ENCODE measurements at regions of chr11 and their contacts with region 1.

Region 1: DNA sequence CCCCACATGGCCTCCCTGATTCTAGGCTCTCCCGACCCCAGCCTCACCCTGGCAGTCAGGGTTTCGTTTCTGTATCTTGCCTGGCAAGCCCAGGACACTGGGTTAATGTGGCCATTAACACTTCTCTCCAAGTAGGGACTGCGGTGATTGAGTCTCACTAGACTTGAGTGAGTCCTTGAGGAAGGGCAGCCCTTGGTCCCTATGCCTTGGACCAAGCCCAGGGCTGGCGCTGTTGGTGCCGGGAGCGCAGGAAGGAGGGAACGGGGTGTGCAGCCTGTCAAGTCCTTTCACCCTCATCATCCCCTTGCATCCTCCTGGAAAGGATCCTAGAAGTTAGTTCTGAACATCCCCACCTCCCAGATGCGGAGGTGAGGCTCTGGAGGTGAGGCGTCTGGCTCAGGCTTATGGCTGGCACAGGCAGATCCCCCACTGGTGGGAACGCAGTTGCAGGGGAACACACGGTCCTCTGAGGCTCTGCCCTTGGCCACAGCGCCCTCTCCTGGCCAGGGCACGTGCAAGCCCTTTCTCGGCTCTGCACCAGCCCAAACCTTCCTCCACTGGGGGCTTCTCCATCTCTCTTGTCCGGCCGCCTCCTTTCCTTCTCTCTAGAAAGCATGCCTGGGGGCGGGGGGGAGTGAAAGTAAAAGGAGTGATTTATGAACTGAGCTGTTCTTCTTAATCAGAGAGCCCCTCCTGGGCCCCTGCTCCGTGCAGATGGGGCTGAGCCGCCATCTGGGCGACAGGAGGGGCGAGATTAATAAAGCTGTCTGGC is 56.7 kb downstream of the TP53I11 start:
- DNase-seq: peak; percentile 73 to 82
- ATAC-seq: peak; percentile 90 to 95 (median 92)
- H3K4me3 ChIP-seq: no peak overlapping the region
- H3K27ac ChIP-seq: peak overlapping the region in 9 of 10 donors; percentile 17 to 68 (median 42)
- H3K4me1 ChIP-seq: peaks cover 0 to 39% (median 18%) of the 10 kb centered on the region in 9 donors
- H3K27me3 ChIP-seq: no peaks in the 10 kb centered on the region
- CTCF ChIP-seq: peak; percentile 78 to 94 (median 90)

Region 2: GRCh38 chr11:44621140-44621681 is 272.8 kb before region 1 on chr11:
- intact Hi-C with region 1: loop called in 9 of 10 experiments (anchors 1 to 5 kb)
- DNase-seq: peak; percentile 76 to 83
- ATAC-seq: peak; percentile 62 to 82 (median 70)
- H3K4me3 ChIP-seq: peak overlapping the region in 6 of 10 donors; percentile 10 to 39 (median 33)
- H3K27ac ChIP-seq: no peak overlapping the region
- H3K4me1 ChIP-seq: peaks cover 12 to 54% (median 37%) of the 10 kb centered on the region in 9 donors
- H3K27me3 ChIP-seq: no peaks in the 10 kb centered on the region
- CTCF ChIP-seq: peak; percentile 97 to 99 (median 98)

Region 3: GRCh38 chr11:44634401-44635281 is 259.4 kb before region 1 on chr11:
- intact Hi-C with region 1: loop called in 2 of 10 experiments (anchors 5 kb)
- DNase-seq: peak; percentile 72 to 83
- ATAC-seq: peak; percentile 67 to 89 (median 82)
- H3K4me3 ChIP-seq: peak overlapping the region in 1 of 10 donors; percentile 26
- H3K27ac ChIP-seq: peak overlapping the region in 3 of 10 donors; percentile 14 to 62 (median 45)
- H3K4me1 ChIP-seq: peaks cover 10 to 52% (median 36%) of the 10 kb centered on the region in 9 donors
- H3K27me3 ChIP-seq: no peaks in the 10 kb centered on the region
- CTCF ChIP-seq: no peak

Region 4: DNA sequence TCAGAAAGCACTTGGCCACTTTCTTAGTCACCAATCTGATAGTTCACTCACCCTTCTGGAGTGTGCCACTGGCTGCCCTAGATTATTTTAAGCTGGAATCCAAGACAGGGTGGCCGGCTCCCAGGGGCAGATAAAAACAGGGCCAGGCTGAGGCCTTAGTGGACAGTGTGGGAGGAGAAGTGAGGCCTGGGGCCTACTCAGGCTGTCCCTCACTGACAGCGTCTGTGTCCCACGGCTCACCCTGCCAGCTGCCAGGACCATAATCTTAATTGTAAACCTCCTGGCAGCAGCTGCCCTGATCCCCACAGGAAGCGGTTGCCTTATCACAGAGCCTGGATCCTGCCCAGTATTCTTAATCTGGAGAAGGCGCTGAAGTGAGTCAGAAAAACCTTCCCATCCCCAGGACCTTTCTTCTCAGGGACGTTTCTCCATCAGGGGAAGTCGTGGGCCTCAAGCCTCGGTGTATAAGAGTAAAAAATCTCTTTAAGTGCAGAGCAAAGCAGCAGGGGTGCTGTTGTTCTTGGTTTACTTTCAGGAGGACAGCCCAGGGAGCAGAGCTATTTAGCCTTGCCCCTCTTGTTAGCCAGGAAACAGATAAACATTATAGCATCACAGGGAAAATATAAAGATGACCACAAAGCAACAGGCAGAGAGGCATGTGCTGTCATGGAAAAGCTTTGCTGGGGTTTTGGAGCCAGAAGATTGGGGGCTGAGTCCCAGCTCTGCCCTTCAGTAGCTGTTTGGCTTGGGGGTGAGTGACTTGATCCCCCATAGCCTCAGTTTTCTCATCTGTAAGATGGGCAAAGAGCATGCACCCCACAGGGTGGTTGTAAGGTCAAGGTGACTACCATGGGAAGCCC is 127.7 kb before region 1 on chr11:
- intact Hi-C with region 1: loop called in 1 of 10 experiments (anchors 5 kb)
- DNase-seq: peak; percentile 72 to 80
- ATAC-seq: peak; percentile 71 to 92 (median 83)
- H3K4me3 ChIP-seq: no peak overlapping the region
- H3K27ac ChIP-seq: peak overlapping the region; percentile 81 to 92 (median 87)
- H3K4me1 ChIP-seq: peaks cover 16 to 84% (median 71%) of the 10 kb centered on the region in 9 donors
- H3K27me3 ChIP-seq: no peaks in the 10 kb centered on the region
- CTCF ChIP-seq: peak in 3 of 9 donors; percentile 7 to 28 (median 21)

Region 5: GRCh38 chr11:44785856-44786606 is 108.0 kb before region 1 on chr11:
- intact Hi-C with region 1: loop called in 1 of 10 experiments (anchors 10 kb)
- DNase-seq: no peak
- ATAC-seq: peak in 5 of 8 donors; percentile 12 to 37 (median 25)
- H3K4me3 ChIP-seq: no peak overlapping the region
- H3K27ac ChIP-seq: peak overlapping the region in 5 of 10 donors; percentile 7 to 75 (median 36)
- H3K4me1 ChIP-seq: peaks cover 16 to 85% (median 56%) of the 10 kb centered on the region in 9 donors
- H3K27me3 ChIP-seq: no peaks in the 10 kb centered on the region
- CTCF ChIP-seq: peak in 5 of 9 donors; percentile 6 to 35 (median 27)

Region 6: GRCh38 chr11:44877571-44878497 is 16.2 kb before region 1 on chr11:
- intact Hi-C with region 1: no loop called
- DNase-seq: no peak
- ATAC-seq: peak in 7 of 8 donors; percentile 23 to 56 (median 40)
- H3K4me3 ChIP-seq: no peak overlapping the region
- H3K27ac ChIP-seq: peak overlapping the region in 4 of 10 donors; percentile 1 to 54 (median 16)
- H3K4me1 ChIP-seq: peaks cover 0 to 36% (median 14%) of the 10 kb centered on the region in 9 donors
- H3K27me3 ChIP-seq: no peaks in the 10 kb centered on the region
- CTCF ChIP-seq: no peak

Region 7: DNA sequence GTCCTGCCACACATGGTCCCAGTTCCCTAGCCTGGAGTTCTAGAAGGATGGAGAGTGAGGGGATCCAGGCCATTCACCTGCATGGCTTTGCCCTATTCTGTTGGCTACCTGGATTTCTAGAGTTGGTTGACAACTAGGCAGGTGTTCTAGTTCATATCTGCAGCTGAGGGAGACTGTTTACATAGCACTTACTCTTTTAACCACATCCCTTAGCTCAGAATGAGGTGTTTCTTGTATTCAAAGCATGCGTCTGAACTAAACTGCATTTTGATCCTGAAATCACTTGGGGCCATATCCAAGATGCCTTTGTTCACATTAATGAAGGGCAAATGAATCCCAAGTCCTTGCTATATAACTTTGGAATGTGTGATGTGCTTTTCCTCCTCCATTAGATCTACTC is 331.2 kb after region 1 on chr11:
- intact Hi-C with region 1: no loop called
- DNase-seq: no peak
- ATAC-seq: no peak
- H3K4me3 ChIP-seq: no peak overlapping the region
- H3K27ac ChIP-seq: no peak overlapping the region
- H3K4me1 ChIP-seq: no peaks in the 10 kb centered on the region
- H3K27me3 ChIP-seq: no peaks in the 10 kb centered on the region
- CTCF ChIP-seq: no peak

Measured in heart right ventricle (tissue), 16 donors.